ENCODE measurements at regions of chr9 and their contacts with region 1.

Region 1: DNA sequence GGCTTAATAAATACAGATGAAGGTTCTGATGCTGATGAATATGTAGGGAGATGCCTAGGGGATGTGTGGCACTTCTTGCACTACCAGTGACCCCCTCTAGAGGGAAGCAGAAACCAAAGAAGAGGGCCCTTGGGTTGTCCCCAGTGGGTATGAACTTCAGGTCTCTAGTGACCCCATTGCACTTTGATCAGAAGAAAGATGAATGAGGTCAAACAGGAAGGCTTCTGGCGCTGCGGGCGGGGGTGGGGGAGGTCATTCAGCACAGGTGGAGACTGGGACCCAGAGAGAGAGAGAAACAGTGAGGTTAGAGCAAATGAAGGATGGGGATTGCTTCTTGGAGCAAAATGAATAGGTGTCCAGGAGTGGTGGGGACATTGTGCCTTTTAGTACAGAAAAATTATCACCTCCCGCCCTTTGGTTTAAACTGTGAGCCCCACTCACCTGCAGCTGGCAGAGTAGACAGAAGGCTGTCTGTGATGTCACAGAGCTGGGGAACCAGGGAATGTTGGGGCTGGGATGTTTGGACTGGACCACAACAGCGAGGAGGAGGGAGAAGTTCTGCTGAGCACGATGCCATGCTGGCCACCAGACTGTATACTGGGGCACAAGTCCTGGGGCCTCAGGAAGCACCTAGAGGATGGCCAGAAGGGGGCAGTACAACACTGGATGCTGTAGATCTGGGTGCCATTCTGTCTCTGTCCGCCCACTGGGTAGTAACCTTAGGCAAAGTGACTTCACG is at the start of gene TEX48:
- DNase-seq: peak; percentile 66 to 88
- ATAC-seq: peak; percentile 80 to 87
- H3K4me3 ChIP-seq: no peak within 1 kb of the TSS
- H3K27ac ChIP-seq: peak within 1 kb of the TSS; percentile 9 to 48; a peak in 3 of 6 replicates
- H3K4me1 ChIP-seq: peaks cover 32% of the 10 kb centered on the region
- CTCF ChIP-seq: peak; percentile 61
- EP300 ChIP-seq: no peak
- POLR2A ChIP-seq: no peak
- RAD21 ChIP-seq: peak; percentile 76 to 92
- polyA plus RNA-seq, gene TEX48: 0.16 TPM in 1 of 2 replicates, not detected in the other

Region 2: DNA sequence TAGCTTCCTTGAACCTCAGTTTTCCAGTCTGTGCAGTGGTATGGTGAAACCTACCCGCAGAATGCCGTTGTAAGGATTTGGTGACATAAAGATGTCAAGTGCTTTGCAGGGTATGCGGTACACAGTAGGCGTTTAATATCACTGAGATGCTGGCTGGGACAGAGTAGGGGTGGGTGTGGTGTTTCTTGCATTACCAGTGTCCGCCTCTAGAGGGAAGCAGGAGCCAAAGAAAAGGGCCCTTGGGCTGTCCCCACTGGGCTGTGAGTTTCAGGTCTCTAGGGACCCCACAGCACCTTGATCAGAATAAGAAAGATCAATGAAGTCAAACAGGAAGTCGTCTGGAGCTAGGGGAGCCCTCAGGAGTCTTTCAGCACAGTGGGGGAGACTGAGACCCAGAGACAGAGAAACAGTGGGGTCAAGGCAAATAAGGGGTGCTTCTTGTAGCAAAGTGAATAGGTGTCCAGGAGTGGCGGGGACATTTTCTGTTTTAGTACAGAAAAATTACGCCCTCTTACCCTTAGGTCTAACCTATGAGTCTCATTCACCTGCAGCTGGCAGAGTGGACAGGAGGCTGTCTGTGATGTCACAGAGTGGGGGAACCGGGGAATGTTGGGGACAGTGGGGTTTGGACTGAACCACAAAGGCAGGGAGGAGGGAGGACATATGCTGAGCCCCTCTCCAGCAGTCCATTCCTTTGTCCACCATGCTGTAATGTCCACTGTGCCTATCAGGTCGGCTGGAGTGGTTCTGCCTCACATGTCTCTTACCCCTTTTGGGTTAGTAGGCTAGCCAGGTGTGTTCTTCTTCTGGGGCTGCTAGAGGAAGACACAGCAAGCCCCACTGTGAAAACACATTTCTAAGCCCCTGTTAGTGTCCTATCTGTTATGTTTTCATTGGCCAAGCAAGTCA is 19.4 kb before region 1 on chr9:
- CTCF ChIA-PET with region 1: interaction called, 165 read pairs
- POLR2A ChIA-PET with region 1: no interaction called
- DNase-seq: peak; percentile 33 to 92
- ATAC-seq: peak; percentile 86 to 97
- H3K4me3 ChIP-seq: no peak overlapping the region
- H3K27ac ChIP-seq: peak overlapping the region; percentile 10 to 40; a peak in 4 of 6 replicates
- H3K4me1 ChIP-seq: no peaks in the 10 kb centered on the region
- CTCF ChIP-seq: peak; percentile 88
- EP300 ChIP-seq: no peak
- POLR2A ChIP-seq: no peak
- RAD21 ChIP-seq: peak; percentile 94

Region 3: DNA sequence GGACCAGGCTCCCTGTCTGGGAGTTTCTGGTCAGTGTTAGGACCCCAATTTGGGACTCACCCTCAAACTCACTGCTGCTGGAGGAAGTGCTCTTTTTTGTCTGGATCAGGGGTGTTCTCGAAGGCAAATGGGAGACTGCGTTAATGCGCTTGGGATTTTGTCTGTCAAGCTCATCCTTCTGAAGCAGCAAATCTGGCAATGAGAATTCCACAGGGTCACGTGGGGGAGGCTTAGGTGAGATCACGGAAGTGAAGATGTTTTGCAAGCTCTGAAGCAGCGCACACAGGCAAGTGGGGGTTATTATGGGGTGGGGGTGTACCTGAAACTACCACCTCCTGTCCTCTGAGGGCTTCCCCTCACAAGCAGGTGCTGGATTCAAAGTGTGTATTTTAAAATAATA is 13.6 kb before region 1 on chr9:
- CTCF ChIA-PET with region 1: interaction called, 165 read pairs
- POLR2A ChIA-PET with region 1: no interaction called
- DNase-seq: no peak
- ATAC-seq: no peak
- H3K4me3 ChIP-seq: no peak overlapping the region
- H3K27ac ChIP-seq: no peak overlapping the region
- H3K4me1 ChIP-seq: peaks cover 10% of the 10 kb centered on the region
- CTCF ChIP-seq: no peak
- EP300 ChIP-seq: no peak
- POLR2A ChIP-seq: no peak
- RAD21 ChIP-seq: no peak

Region 4: GRCh38 chr9:114721491-114722079 is 39.8 kb after region 1 on chr9:
- CTCF ChIA-PET with region 1: interaction called, 14 read pairs
- POLR2A ChIA-PET with region 1: no interaction called
- DNase-seq: peak; percentile 15 to 48
- ATAC-seq: peak; percentile 73 to 74; a peak in 5 of 6 replicates
- H3K4me3 ChIP-seq: no peak overlapping the region
- H3K27ac ChIP-seq: 0 out of 6 replicates have a peak overlapping the region, but pooled peaks have one; percentile 1 to 30
- H3K4me1 ChIP-seq: peaks cover 17% of the 10 kb centered on the region
- CTCF ChIP-seq: no peak
- EP300 ChIP-seq: no peak
- POLR2A ChIP-seq: no peak
- RAD21 ChIP-seq: no peak

Region 5: DNA sequence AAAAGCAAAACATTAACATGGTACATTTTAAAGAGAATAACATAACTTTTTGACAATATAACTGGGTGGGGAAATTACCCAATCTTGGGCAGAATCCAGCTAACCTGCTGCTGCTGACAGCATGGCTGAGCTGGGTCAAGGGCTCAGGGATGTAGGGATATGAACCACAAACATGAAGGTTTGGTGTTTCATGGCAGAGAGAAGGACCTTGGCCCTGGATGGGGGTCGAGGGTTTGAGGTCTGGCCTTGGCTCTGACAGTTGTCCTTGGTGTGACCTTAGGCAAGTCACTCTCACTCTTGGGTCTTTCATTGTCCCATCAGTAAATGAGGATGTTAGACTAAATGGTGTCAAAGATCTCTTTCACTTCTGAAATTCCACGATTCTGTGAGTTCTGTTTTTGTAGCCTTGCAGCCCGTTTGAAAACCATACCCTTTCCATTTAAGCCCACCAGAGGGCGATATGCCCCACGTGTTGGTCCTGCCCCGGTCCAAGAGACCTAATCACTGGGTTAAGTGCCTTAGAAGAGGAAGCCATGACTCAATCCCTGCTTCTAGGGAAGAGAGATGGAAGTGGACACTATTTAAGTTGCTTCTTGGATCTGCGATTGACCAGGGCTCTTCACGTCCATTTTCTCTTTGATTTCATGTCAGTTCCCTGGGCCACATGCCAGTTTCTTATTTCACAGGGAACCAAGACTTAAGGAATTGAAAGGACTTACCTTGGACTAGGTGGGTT is 57.0 kb after region 1 on chr9:
- CTCF ChIA-PET with region 1: interaction called, 52 read pairs
- POLR2A ChIA-PET with region 1: no interaction called
- DNase-seq: peak; percentile 71 to 84
- ATAC-seq: peak; percentile 89 to 97
- H3K4me3 ChIP-seq: no peak overlapping the region
- H3K27ac ChIP-seq: peak overlapping the region; percentile 24 to 68; a peak in 5 of 6 replicates
- H3K4me1 ChIP-seq: peaks cover 26% of the 10 kb centered on the region
- CTCF ChIP-seq: peak; percentile 89
- EP300 ChIP-seq: no peak
- POLR2A ChIP-seq: no peak
- RAD21 ChIP-seq: peak; percentile 98 to 99

Region 6: GRCh38 chr9:114894801-114895433 is 213.2 kb after region 1 on chr9:
- CTCF ChIA-PET with region 1: interaction called, 29 read pairs
- POLR2A ChIA-PET with region 1: interaction called, 3 read pairs
- DNase-seq: peak; percentile 60 to 85
- ATAC-seq: peak; percentile 89 to 91
- H3K4me3 ChIP-seq: no peak overlapping the region
- H3K27ac ChIP-seq: peak overlapping the region; percentile 65 to 77
- H3K4me1 ChIP-seq: peaks cover 41% of the 10 kb centered on the region
- CTCF ChIP-seq: no peak
- EP300 ChIP-seq: peak in 1 of 2 experiments; percentile 39; a peak in 1 of 5 replicates
- POLR2A ChIP-seq: no peak
- RAD21 ChIP-seq: no peak

Region 7: GRCh38 chr9:114988962-114989599 is 307.3 kb after region 1 on chr9:
- CTCF ChIA-PET with region 1: no interaction called
- POLR2A ChIA-PET with region 1: no interaction called
- DNase-seq: no peak
- ATAC-seq: peak in 1 of 2 experiments; percentile 59; a peak in 1 of 6 replicates
- H3K4me3 ChIP-seq: no peak overlapping the region
- H3K27ac ChIP-seq: no peak overlapping the region
- H3K4me1 ChIP-seq: 0 out of 3 replicates have a peak, but pooled peaks cover 3% of the 10 kb centered on the region
- CTCF ChIP-seq: no peak
- EP300 ChIP-seq: no peak
- POLR2A ChIP-seq: no peak
- RAD21 ChIP-seq: no peak

Region 8: GRCh38 chr9:115008536-115009270 is 326.9 kb after region 1 on chr9:
- CTCF ChIA-PET with region 1: interaction called, 32 read pairs
- POLR2A ChIA-PET with region 1: no interaction called
- DNase-seq: peak; percentile 33 to 51
- ATAC-seq: peak; percentile 95 to 96
- H3K4me3 ChIP-seq: no peak overlapping the region
- H3K27ac ChIP-seq: peak overlapping the region in 1 of 2 experiments; percentile 34; a peak in 1 of 6 replicates
- H3K4me1 ChIP-seq: peaks cover 9% of the 10 kb centered on the region; the same call in 1 of the 3 replicates
- CTCF ChIP-seq: no peak
- EP300 ChIP-seq: no peak
- POLR2A ChIP-seq: no peak
- RAD21 ChIP-seq: 0 out of 5 replicates have a peak, but pooled peaks of 1 of the 2 experiments have one; percentile 14